H1 (cell line): ENCODE measurements at regions of chr1 and their contacts with region 1.

Region 1: GRCh38 chr1:91021686-91022517 is at the start of gene ZNF644:
- DNase-seq: peak; percentile 73 to 87
- H3K4me3 ChIP-seq: peak within 1 kb of the TSS; percentile 85 to 91 (median 90)
- H3K27ac ChIP-seq: peak within 1 kb of the TSS; percentile 100
- H3K4me1 ChIP-seq: peaks cover 0 to 6% (median 2%) of the 10 kb centered on the region in 4 experiments; a peak in 4 of 7 replicates
- H3K27me3 ChIP-seq: no peaks in the 10 kb centered on the region
- CTCF ChIP-seq: no peak
- EP300 ChIP-seq: no peak
- POLR2A ChIP-seq: peak; percentile 83 to 95
- RAD21 ChIP-seq: no peak
- total RNA-seq, gene ZNF644: 85.2 and 93.5 TPM in 2 replicates

Region 2: DNA sequence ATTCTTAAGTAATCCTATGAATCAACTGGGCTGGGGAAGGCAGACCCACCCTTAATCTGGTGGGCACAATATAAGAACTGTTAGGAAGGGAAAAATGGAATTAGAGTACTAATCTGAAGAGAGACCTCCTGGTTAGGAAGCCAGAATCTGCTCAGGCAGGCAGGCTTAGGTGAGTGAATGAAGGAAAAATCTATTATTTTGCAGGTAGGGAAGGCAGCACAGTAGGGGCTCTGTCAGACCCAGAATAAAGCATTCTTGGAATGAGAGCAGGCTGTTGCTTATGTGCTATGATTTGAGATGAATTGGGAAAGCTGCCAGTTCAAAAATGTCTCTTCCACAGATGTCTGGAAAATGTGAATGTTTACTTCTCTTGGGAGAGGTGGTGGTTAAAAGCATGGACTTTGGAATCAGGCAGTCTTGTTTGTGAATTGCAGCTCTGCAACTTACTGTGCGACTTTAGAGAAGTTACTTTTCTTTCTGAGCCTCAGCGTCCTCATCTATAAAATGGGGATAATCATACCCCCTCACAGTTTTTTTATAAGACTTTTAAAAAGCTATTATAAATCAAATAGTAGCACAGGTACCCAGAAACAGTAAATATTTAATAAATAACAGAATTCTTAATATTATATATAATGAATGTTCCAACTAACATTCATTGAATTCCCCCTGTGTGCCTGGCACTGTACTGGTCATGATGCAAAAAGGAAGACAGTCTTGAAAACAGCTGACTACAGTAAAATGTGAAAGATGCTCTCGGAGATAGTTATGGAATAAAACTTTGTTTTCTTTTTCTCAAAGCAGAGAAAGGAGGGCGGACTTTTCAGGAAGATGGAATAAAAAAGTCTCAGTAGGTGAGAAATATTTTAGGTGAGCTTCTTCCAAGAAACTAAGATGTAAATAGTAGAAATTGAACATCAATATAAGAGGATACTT is 15.3 kb after region 1 on chr1:
- CTCF ChIA-PET with region 1: interaction called, 3 read pairs
- POLR2A ChIA-PET with region 1: interaction called, 16 read pairs
- DNase-seq: no peak
- H3K4me3 ChIP-seq: no peak overlapping the region
- H3K27ac ChIP-seq: no peak overlapping the region
- H3K4me1 ChIP-seq: no peaks in the 10 kb centered on the region
- H3K27me3 ChIP-seq: peaks cover 0 to 12% (median 9%) of the 10 kb centered on the region in 4 experiments; a peak in 5 of 7 replicates
- CTCF ChIP-seq: no peak
- EP300 ChIP-seq: no peak
- POLR2A ChIP-seq: no peak
- RAD21 ChIP-seq: no peak

Region 3: DNA sequence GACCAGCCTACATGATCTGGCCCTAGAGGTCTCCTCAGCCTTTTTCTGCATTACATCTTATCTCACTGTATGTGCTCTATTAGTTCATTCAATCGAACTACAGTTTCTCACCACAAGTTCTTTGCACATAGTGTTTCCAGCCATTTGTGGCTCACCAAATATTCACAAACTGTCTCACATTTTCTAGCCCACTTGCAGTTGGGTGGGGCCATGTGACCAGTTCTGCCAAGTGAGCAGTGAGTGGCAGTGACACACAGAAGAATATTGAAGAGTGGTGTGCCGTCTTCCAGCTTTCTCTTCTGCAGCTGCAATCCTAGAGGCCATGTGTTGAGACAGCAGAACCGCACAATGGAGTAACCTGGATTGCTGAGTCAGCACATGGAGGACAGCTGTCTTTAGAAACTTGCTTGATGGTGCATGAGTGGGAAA is 103.1 kb after region 1 on chr1:
- CTCF ChIA-PET with region 1: no interaction called
- POLR2A ChIA-PET with region 1: interaction called, 16 read pairs
- DNase-seq: no peak
- H3K4me3 ChIP-seq: no peak overlapping the region
- H3K27ac ChIP-seq: no peak overlapping the region
- H3K4me1 ChIP-seq: peaks cover 6 to 35% (median 27%) of the 10 kb centered on the region in 4 experiments
- H3K27me3 ChIP-seq: no peaks in the 10 kb centered on the region; a peak in 1 of 7 replicates
- CTCF ChIP-seq: no peak
- EP300 ChIP-seq: no peak
- POLR2A ChIP-seq: no peak
- RAD21 ChIP-seq: no peak